CD8-positive, alpha-beta memory T cell (primary cell): ENCODE measurements at regions of chr5 and their contacts with region 1.

Region 1: GRCh38 chr5:173615884-173616576 is 420 bp downstream of the BOD1 start:
- DNase-seq: peak; percentile 52 to 78 (median 67)
- H3K4me3 ChIP-seq: peak overlapping the region; percentile 67
- H3K4me3 Mint-ChIP-seq: peak overlapping the region; percentile 92 to 98 (median 96)
- H3K27ac ChIP-seq: peak overlapping the region; percentile 76
- H3K27ac Mint-ChIP-seq: peak overlapping the region; percentile 75 to 97 (median 96)
- H3K4me1 ChIP-seq: peaks cover 30% of the 10 kb centered on the region
- H3K4me1 Mint-ChIP-seq: peaks cover 43 to 57% (median 54%) of the 10 kb centered on the region in 3 donors
- H3K27me3 ChIP-seq: no peaks in the 10 kb centered on the region
- H3K27me3 Mint-ChIP-seq: no peaks in the 10 kb centered on the region

Region 2: GRCh38 chr5:173887610-173888472 is 271.8 kb after region 1 on chr5 and contains the start of gene CPEB4:
- CTCF ChIA-PET with region 1: interaction called, 11 read pairs
- POLR2A ChIA-PET with region 1: interaction called, 16 read pairs
- DNase-seq: peak; percentile 94 to 99 (median 97)
- H3K4me3 ChIP-seq: peak within 1 kb of the TSS; percentile 81
- H3K4me3 Mint-ChIP-seq: peak within 1 kb of the TSS; percentile 95 to 100 (median 98)
- H3K27ac ChIP-seq: peak within 1 kb of the TSS; percentile 80
- H3K27ac Mint-ChIP-seq: peak within 1 kb of the TSS; percentile 81 to 100 (median 99)
- H3K4me1 ChIP-seq: peaks cover 67% of the 10 kb centered on the region
- H3K4me1 Mint-ChIP-seq: peaks cover 76 to 92% (median 91%) of the 10 kb centered on the region in 3 donors
- H3K27me3 ChIP-seq: no peaks in the 10 kb centered on the region
- H3K27me3 Mint-ChIP-seq: no peaks in the 10 kb centered on the region
- total RNA-seq, gene CPEB4: 17.2 to 18.7 TPM

Region 3: GRCh38 chr5:173917788-173918786 is 302.1 kb after region 1 on chr5:
- CTCF ChIA-PET with region 1: interaction called, 43 read pairs
- POLR2A ChIA-PET with region 1: interaction called, 21 read pairs
- DNase-seq: peak; percentile 33 to 82 (median 73)
- H3K4me3 ChIP-seq: peak overlapping the region; percentile 66
- H3K4me3 Mint-ChIP-seq: no peak overlapping the region
- H3K27ac ChIP-seq: peak overlapping the region; percentile 71
- H3K27ac Mint-ChIP-seq: no peak overlapping the region
- H3K4me1 ChIP-seq: peaks cover 11% of the 10 kb centered on the region
- H3K4me1 Mint-ChIP-seq: peaks cover 0 to 6% (median 2%) of the 10 kb centered on the region in 3 donors
- H3K27me3 ChIP-seq: no peaks in the 10 kb centered on the region
- H3K27me3 Mint-ChIP-seq: no peaks in the 10 kb centered on the region

Region 4: GRCh38 chr5:173925448-173926071 is 309.5 kb after region 1 on chr5:
- CTCF ChIA-PET with region 1: interaction called, 43 read pairs
- POLR2A ChIA-PET with region 1: interaction called, 4 read pairs
- DNase-seq: peak in 4 of 5 donors; percentile 7 to 55 (median 16)
- H3K4me3 ChIP-seq: no peak overlapping the region
- H3K4me3 Mint-ChIP-seq: no peak overlapping the region
- H3K27ac ChIP-seq: no peak overlapping the region
- H3K27ac Mint-ChIP-seq: no peak overlapping the region
- H3K4me1 ChIP-seq: no peaks in the 10 kb centered on the region
- H3K4me1 Mint-ChIP-seq: peaks cover 8 to 25% (median 21%) of the 10 kb centered on the region in 3 donors
- H3K27me3 ChIP-seq: no peaks in the 10 kb centered on the region
- H3K27me3 Mint-ChIP-seq: no peaks in the 10 kb centered on the region

Region 5: DNA sequence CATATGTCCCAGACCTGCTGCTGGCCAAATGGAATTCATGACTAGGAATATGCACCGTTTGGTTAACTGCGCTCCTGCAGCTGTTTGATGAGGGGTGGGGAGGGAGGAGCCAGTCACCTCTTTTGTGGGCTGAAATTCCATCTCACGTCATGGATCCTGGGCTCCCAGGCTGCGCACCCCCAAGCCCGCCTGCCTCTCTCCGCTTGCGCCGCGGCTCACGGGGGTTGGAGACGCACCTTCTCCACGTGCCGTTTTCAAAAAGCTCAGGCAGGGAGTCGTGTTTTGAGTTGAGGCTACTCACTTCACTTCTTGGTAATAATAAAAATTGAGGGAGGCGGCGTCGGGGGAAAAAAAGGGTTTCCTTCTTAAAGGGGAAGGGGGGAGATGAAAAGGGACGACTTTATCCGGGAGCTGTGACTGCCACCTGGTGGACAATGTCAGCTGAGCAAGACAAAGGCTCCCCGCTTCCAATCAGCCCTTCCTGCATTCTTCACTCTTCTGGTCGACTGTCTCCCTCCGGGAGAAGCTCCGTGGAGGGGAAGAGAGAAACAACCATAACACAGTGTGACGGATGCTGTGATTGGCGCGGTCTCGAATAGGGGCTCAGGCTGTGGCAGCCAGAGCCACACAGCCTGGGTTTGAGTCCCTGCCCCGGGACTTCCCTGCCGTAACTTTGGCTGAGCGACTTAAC is 357.0 kb after region 1 on chr5:
- CTCF ChIA-PET with region 1: interaction called, 108 read pairs
- POLR2A ChIA-PET with region 1: interaction called, 5 read pairs
- DNase-seq: peak; percentile 56 to 81 (median 65)
- H3K4me3 ChIP-seq: peak overlapping the region; percentile 63
- H3K4me3 Mint-ChIP-seq: peak overlapping the region; percentile 63 to 84 (median 76)
- H3K27ac ChIP-seq: no peak overlapping the region
- H3K27ac Mint-ChIP-seq: peak overlapping the region in 2 of 8 donors; percentile 46 to 83
- H3K4me1 ChIP-seq: peaks cover 13% of the 10 kb centered on the region
- H3K4me1 Mint-ChIP-seq: peaks cover 6 to 11% (median 10%) of the 10 kb centered on the region in 3 donors
- H3K27me3 ChIP-seq: no peaks in the 10 kb centered on the region
- H3K27me3 Mint-ChIP-seq: peaks cover 9 to 28% of the 10 kb centered on the region in 2 donors